ENCODE measurements at regions of chr3 and their contacts with region 1.

Region 1: DNA sequence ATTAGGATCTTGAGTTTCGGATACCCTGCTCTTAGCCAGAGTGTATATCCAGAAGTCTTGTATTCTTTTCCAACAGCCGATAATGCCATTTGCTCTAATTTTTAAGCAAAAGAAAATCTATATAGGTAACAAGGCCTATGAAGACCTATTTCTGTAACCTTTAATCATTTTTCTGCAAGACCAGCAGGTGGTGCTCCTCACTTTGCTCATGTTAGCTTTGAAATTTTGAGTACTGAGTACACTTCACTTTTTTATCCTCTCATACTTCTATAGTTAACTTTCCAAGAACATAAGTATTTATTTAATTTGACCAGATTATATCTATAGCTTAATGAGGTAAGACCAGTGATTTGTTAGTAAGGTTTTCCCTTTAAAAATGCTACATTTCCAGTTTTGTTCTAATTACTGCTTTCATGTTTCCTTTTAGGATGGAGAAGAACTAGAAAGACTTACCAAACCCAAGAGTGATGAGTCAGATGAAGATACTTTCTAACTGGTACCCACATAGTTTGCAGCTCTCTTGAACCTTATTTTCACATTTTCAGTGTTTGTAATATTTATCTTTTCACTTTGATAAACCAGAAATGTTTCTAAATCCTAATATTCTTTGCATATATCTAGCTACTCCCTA is 20.5 kb downstream of the SLC35A5 start:
- DNase-seq: peak; percentile 64
- ATAC-seq: peak; percentile 78
- H3K4me3 Mint-ChIP-seq: no peak overlapping the region
- H3K27ac Mint-ChIP-seq: peak overlapping the region; percentile 22
- H3K4me1 Mint-ChIP-seq: peaks cover 13% of the 10 kb centered on the region
- H3K27me3 Mint-ChIP-seq: no peaks in the 10 kb centered on the region

Region 2: DNA sequence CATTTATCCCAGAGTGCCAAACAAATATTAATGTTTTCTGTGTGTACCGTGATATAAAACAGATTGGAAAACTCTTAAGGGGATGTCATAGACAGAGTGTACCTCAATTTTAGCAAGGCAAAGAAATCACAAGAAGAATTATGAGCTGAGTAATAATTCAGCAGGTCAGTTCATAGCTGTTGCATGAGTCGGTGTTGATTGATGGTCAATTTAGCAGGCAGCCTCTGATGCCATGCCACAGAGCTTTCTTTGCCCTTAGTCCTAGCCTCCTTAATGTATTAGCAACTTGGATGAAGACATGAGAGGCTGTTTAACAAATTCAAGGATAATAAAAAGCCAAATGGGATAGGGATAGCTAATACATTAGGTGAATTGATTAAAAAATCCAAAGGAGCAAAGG is 13.7 kb before region 1 on chr3:
- CTCF ChIA-PET with region 1: interaction called, 12 read pairs
- DNase-seq: no peak
- ATAC-seq: no peak
- H3K4me3 Mint-ChIP-seq: no peak overlapping the region
- H3K27ac Mint-ChIP-seq: no peak overlapping the region
- H3K4me1 Mint-ChIP-seq: peaks cover 10% of the 10 kb centered on the region
- H3K27me3 Mint-ChIP-seq: no peaks in the 10 kb centered on the region

Region 3: GRCh38 chr3:112605285-112605684 is 22.9 kb after region 1 on chr3:
- CTCF ChIA-PET with region 1: interaction called, 16 read pairs
- DNase-seq: no peak
- ATAC-seq: peak; percentile 47
- H3K4me3 Mint-ChIP-seq: no peak overlapping the region
- H3K27ac Mint-ChIP-seq: no peak overlapping the region
- H3K4me1 Mint-ChIP-seq: peaks cover 33% of the 10 kb centered on the region
- H3K27me3 Mint-ChIP-seq: peaks cover 18% of the 10 kb centered on the region

Region 4: GRCh38 chr3:112635671-112636070 is 53.3 kb after region 1 on chr3:
- CTCF ChIA-PET with region 1: interaction called, 12 read pairs
- DNase-seq: no peak
- ATAC-seq: no peak
- H3K4me3 Mint-ChIP-seq: no peak overlapping the region
- H3K27ac Mint-ChIP-seq: no peak overlapping the region
- H3K4me1 Mint-ChIP-seq: peaks cover 15% of the 10 kb centered on the region
- H3K27me3 Mint-ChIP-seq: no peaks in the 10 kb centered on the region

Region 5: DNA sequence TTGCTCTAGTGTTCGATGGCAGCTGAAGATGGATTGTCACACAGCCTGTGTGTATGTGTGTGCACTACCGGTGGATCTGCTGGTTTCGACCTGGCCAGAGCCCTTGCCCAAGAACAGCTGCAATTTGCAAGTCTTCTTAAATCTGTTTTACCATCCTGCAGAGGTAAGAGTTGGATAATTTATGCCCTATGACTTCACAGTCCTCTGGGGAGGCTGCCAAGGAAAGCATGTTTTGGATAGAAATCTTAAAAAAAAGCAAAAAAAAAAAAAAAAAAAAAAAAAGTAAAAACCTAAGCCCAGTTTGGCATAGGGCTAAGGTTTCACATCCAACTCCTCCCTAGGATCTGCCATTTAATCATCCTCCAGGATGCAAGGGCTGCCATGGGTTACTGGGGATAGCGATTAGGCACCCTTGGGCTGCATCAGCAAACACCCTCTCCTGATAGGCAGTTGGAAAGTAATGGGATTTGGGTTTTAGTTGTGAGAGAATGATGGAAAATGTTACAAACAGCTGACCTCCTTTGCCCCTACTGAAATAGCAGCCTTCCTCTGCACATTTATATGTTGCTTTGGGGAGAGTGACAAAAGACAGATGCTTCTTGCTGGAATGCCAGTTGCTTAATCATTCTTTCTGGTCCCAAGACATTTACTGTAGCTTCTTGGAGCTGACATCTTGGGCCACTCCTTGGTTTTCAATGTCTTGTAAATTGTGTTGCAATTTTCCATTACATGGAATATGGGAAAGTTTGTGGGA is 228.9 kb after region 1 on chr3:
- CTCF ChIA-PET with region 1: no interaction called
- DNase-seq: no peak
- ATAC-seq: no peak
- H3K4me3 Mint-ChIP-seq: no peak overlapping the region
- H3K27ac Mint-ChIP-seq: no peak overlapping the region
- H3K4me1 Mint-ChIP-seq: peaks cover 27% of the 10 kb centered on the region
- H3K27me3 Mint-ChIP-seq: peaks cover 6% of the 10 kb centered on the region

Region 6: GRCh38 chr3:112979240-112979832 is 397.0 kb after region 1 on chr3:
- CTCF ChIA-PET with region 1: interaction called, 11 read pairs
- DNase-seq: no peak
- ATAC-seq: no peak
- H3K4me3 Mint-ChIP-seq: no peak overlapping the region
- H3K27ac Mint-ChIP-seq: no peak overlapping the region
- H3K4me1 Mint-ChIP-seq: peaks cover 53% of the 10 kb centered on the region
- H3K27me3 Mint-ChIP-seq: no peaks in the 10 kb centered on the region